AG04449 (cell line): ENCODE measurements at regions of chr3 and their contacts with region 1.

Region 1: DNA sequence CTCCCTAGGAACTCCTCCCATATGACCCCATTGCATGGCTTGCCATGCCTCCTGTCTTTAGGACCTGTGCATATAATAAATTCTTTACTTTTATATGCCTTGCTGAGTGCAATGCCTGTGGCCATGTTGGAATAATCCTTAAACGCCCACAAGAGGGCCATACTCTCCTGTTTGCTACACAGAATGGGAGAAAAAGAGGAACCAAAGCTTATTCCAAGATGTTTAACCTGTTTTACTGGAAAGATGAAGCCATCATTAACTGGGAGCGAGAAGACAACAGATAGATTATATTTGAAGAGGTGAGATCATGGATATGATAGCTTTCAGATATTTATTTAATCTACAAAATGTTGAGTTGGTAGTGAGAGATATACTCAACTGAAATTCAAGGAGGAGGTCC is 1097.9 kb downstream of the NAALADL2 start:
- DNase-seq: peak; percentile 2
- H3K4me3 ChIP-seq: no peak overlapping the region
- CTCF ChIP-seq: peak; percentile 30

Region 2: GRCh38 chr3:176430244-176431037 is 473.4 kb after region 1 on chr3:
- CTCF ChIA-PET with region 1: interaction called, 24 read pairs
- POLR2A ChIA-PET with region 1: no interaction called
- DNase-seq: peak; percentile 38
- H3K4me3 ChIP-seq: no peak overlapping the region
- CTCF ChIP-seq: peak; percentile 52